ENCODE measurements at regions of chr3 and their contacts with region 1.

Region 1: DNA sequence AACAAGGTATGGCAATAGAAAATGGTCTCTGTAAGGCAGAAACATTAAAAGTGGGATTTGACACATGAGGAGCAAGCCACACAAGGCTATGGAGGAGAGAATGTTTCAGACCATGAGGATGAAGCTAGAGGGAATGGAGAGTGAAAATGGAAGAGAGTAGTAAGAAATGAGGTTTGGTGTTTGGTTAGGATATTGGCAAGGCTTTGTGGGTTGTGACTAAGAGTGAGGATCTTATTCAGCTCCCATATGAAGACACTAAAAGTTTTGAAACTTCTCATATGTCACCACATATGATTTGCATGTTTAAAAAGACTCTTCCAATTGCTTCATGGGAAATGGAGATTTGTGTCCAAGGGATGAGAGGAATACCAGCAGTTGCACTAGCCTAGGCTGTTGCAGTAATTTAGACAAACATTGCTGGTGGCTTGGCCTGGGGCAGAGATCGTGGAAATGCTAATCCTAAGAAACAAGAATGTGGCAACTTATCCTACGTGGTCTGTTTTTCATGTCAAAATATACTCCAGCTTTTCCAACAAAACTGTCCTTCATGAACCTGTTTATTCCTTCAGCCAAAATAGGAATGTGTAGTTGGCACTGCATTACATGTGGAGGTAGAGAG is 749.0 kb downstream of the PDCD6IP start:
- DNase-seq: no peak
- ATAC-seq: no peak
- H3K4me3 ChIP-seq: no peak overlapping the region
- H3K27ac ChIP-seq: no peak overlapping the region
- H3K4me1 ChIP-seq: no peaks in the 10 kb centered on the region
- H3K27me3 ChIP-seq: no peaks in the 10 kb centered on the region
- CTCF ChIP-seq: no peak
- POLR2A ChIP-seq: no peak
- RAD21 ChIP-seq: no peak

Region 2: GRCh38 chr3:32816439-32817256 is 1730.8 kb before region 1 on chr3:
- CTCF ChIA-PET with region 1: no interaction called
- POLR2A ChIA-PET with region 1: no interaction called
- dilution Hi-C with region 1: no loop called
- in situ Hi-C with region 1: no loop called
- intact Hi-C with region 1: loop called (anchors 10 kb)
- DNase-seq: no peak
- ATAC-seq: 0 out of 2 replicates have a peak, but pooled peaks have one; percentile 29
- H3K4me3 ChIP-seq: peak overlapping the region; percentile 38
- H3K27ac ChIP-seq: no peak overlapping the region
- H3K4me1 ChIP-seq: peaks cover 3% of the 10 kb centered on the region; the same call in 1 of the 2 replicates
- H3K27me3 ChIP-seq: peaks cover 71% of the 10 kb centered on the region
- CTCF ChIP-seq: no peak
- POLR2A ChIP-seq: no peak
- RAD21 ChIP-seq: no peak

Region 3: DNA sequence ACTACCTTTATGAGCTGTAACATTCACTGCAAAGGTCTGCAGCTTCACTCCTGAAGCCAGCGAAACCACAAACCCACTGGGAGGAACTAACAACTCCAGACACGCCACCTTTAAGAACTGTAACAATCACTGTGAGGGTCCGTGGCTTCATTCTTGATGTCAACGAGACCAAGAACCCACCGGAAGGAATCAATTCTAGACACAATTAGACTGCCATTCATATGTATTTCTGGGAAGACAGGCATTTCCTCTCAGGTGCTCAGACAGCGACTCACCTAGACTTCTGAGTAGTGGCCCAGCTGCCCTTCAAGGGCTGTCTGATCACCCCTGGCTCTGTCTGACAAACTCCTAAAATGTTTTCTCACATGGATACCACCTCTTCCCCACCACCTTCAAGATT is 242.1 kb before region 1 on chr3:
- CTCF ChIA-PET with region 1: no interaction called
- POLR2A ChIA-PET with region 1: no interaction called
- dilution Hi-C with region 1: no loop called
- in situ Hi-C with region 1: no loop called
- intact Hi-C with region 1: no loop called
- DNase-seq: no peak
- ATAC-seq: no peak
- H3K4me3 ChIP-seq: no peak overlapping the region
- H3K27ac ChIP-seq: no peak overlapping the region
- H3K4me1 ChIP-seq: no peaks in the 10 kb centered on the region
- H3K27me3 ChIP-seq: no peaks in the 10 kb centered on the region
- CTCF ChIP-seq: no peak
- POLR2A ChIP-seq: no peak
- RAD21 ChIP-seq: no peak